ENCODE measurements at regions of chr12 and their contacts with region 1.

Region 1: GRCh38 chr12:95918194-95918993 is 24.0 kb downstream of the CCDC38 start:
- DNase-seq: peak in 3 of 10 donors; percentile 12 to 44 (median 36)
- H3K4me3 ChIP-seq: no peak overlapping the region
- H3K27ac ChIP-seq: no peak overlapping the region
- H3K27me3 ChIP-seq: peaks cover 0 to 4% (median 0%) of the 10 kb centered on the region in 45 donors
- CTCF ChIP-seq: peak; percentile 42 to 87 (median 74)

Region 2: GRCh38 chr12:95766356-95767019 is 151.9 kb before region 1 on chr12:
- intact Hi-C with region 1: no loop called
- DNase-seq: no peak
- H3K4me3 ChIP-seq: no peak overlapping the region
- H3K27ac ChIP-seq: no peak overlapping the region
- H3K27me3 ChIP-seq: no peaks in the 10 kb centered on the region
- CTCF ChIP-seq: no peak

Region 3: GRCh38 chr12:95998611-95999286 is 80.4 kb after region 1 on chr12:
- intact Hi-C with region 1: loop called (anchors 2 to 10 kb)
- DNase-seq: peak in 7 of 10 donors; percentile 22 to 62 (median 45)
- H3K4me3 ChIP-seq: no peak overlapping the region
- H3K27ac ChIP-seq: peak overlapping the region in 5 of 59 donors; percentile 0 to 56 (median 35)
- H3K27me3 ChIP-seq: no peaks in the 10 kb centered on the region
- CTCF ChIP-seq: peak; percentile 57 to 90 (median 76)